Right ventricle myocardium superior (tissue), 1 donor: ENCODE measurements at regions of chr22 and their contacts with region 1.

Region 1: GRCh38 chr22:18077639-18078328 is at the start of gene PEX26:
- DNase-seq: peak; percentile 96
- ATAC-seq: peak; percentile 97
- total RNA-seq, gene PEX26: 20.3 TPM

Region 2: GRCh38 chr22:17742527-17742902 is 335.3 kb before region 1 on chr22:
- intact Hi-C with region 1: loop called (anchors 5 kb)
- DNase-seq: peak; percentile 63
- ATAC-seq: peak; percentile 72

Region 3: GRCh38 chr22:17830043-17830961 is 247.5 kb before region 1 on chr22:
- intact Hi-C with region 1: loop called (anchors 2 kb)
- DNase-seq: peak; percentile 87
- ATAC-seq: peak; percentile 84

Region 4: DNA sequence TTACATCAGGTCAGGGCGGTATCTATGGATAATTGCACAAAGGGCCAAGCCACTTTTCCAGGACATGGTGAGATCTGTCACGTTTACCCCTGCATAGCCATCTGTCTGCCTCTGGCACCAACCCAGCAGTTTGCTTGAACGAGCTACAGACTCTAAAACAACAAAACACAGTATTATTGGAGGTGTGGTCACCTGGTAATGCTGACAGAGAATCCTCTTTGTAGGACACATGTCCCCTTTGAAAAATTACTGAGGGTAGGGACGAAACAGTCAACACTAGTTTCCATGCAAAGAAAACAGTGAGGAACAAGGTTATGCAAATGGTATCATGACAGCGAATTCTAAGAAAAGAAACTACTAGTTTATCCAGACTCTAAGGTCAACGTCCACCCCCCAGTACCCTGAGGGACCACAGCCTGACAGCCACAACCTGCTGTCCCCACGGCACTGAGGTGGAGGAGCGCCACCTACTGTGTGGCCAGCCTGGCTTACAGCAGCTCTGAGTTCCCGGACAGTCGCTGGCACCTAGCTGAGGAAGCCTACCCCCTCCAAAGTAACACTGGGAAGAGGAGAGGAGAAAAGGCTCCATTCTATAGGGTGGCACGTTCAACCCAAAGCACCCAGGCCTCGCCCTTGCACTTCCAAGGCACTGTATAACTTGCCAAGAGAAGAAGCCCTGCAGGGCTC is 186.2 kb before region 1 on chr22:
- intact Hi-C with region 1: loop called (anchors 10 kb)
- DNase-seq: peak; percentile 74
- ATAC-seq: peak; percentile 76

Region 5: GRCh38 chr22:17910561-17911311 is 167.0 kb before region 1 on chr22:
- intact Hi-C with region 1: loop called (anchors 5 kb)
- DNase-seq: peak; percentile 84
- ATAC-seq: peak; percentile 86

Region 6: GRCh38 chr22:17980638-17981051 is 97.1 kb before region 1 on chr22:
- intact Hi-C with region 1: loop called (anchors 10 kb)
- DNase-seq: no peak
- ATAC-seq: peak; percentile 65